ENCODE measurements at regions of chr3 and their contacts with region 1.

Region 1: DNA sequence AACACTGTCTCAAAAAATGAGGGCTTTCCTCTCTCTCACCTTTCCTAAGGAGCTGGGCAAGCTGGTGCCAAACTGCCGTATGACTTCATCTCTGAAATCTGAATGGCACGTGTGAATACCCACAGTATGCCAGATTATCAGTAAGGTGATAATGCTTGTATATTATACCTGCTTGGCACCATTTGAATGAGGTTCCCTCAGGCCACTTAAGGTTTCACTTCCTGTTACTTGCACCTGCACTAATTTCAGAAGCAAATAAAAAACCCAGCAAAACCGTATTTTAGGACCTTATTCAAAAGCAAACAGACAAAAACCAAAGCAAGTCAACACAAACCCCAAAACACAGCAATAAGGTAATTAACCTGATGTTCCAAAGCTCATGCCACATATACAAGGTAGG is 19.7 kb downstream of the FOXP1 start:
- DNase-seq: peak; percentile 27
- ATAC-seq: peak; percentile 93
- H3K4me3 ChIP-seq: no peak overlapping the region
- H3K27ac ChIP-seq: no peak overlapping the region
- H3K4me1 ChIP-seq: peaks cover 14% of the 10 kb centered on the region
- H3K27me3 ChIP-seq: no peaks in the 10 kb centered on the region; a peak in 1 of 4 replicates
- CTCF ChIP-seq: no peak
- EP300 ChIP-seq: peak; percentile 52 to 54; a peak in 1 of 4 replicates
- POLR2A ChIP-seq: no peak
- RAD21 ChIP-seq: no peak

Region 2: DNA sequence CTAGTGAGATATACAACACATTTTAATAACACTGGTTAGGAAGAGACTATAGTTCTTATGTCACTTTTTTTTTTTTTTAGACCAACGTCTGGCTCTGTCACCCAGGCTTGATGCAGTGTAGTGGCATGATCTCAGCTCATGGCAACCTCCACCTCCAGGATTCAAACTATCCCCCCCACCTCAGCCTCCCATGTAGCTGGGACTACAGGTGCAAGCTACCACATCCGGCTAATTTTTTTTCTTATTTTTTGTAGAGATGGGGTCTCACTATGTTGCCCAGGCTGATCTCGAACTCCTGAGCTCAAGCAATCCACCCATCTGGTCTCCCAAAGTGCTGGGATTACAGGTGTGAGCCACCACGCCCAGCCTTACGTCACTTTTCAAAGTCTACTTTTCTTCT is 81.1 kb before region 1 on chr3:
- CTCF ChIA-PET with region 1: no interaction called
- POLR2A ChIA-PET with region 1: no interaction called
- RAD21 ChIA-PET with region 1: no interaction called
- SMC1A ChIA-PET with region 1: no interaction called
- in situ Hi-C with region 1: no loop called
- intact Hi-C with region 1: loop called (anchors 1 kb)
- DNase-seq: no peak
- ATAC-seq: no peak
- H3K4me3 ChIP-seq: no peak overlapping the region
- H3K27ac ChIP-seq: no peak overlapping the region
- H3K4me1 ChIP-seq: no peaks in the 10 kb centered on the region
- H3K27me3 ChIP-seq: no peaks in the 10 kb centered on the region
- CTCF ChIP-seq: no peak
- EP300 ChIP-seq: no peak
- POLR2A ChIP-seq: no peak
- RAD21 ChIP-seq: no peak

Region 3: GRCh38 chr3:71579935-71580406 is 16.1 kb after region 1 on chr3:
- CTCF ChIA-PET with region 1: no interaction called
- POLR2A ChIA-PET with region 1: no interaction called
- RAD21 ChIA-PET with region 1: no interaction called
- SMC1A ChIA-PET with region 1: no interaction called
- in situ Hi-C with region 1: no loop called
- intact Hi-C with region 1: no loop called
- DNase-seq: no peak
- ATAC-seq: no peak
- H3K4me3 ChIP-seq: no peak overlapping the region
- H3K27ac ChIP-seq: no peak overlapping the region
- H3K4me1 ChIP-seq: peaks cover 9% of the 10 kb centered on the region
- H3K27me3 ChIP-seq: peaks cover 12 to 33% of the 10 kb centered on the region in 2 experiments
- CTCF ChIP-seq: no peak
- EP300 ChIP-seq: no peak
- POLR2A ChIP-seq: no peak
- RAD21 ChIP-seq: no peak

Region 4: DNA sequence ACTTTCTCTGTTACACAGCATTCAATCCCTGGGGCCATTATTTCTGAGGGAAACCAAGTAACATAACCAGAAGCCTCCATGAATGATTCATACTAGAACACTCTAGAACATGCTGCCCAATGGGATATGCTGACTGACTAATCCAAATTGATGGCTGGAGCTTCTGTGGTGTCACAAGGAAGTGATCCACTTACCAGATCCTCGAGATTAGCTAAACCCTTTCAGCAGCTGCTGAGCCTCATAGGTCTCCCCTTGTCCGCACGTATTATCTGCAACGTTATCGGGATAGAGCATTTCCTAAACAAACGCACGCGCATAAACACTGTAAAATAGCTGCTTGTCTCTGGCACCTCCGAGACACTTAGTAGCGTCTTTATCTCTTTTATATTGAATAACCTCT is 282.4 kb after region 1 on chr3:
- CTCF ChIA-PET with region 1: no interaction called
- POLR2A ChIA-PET with region 1: no interaction called
- RAD21 ChIA-PET with region 1: no interaction called
- SMC1A ChIA-PET with region 1: no interaction called
- in situ Hi-C with region 1: no loop called
- intact Hi-C with region 1: no loop called
- DNase-seq: no peak
- ATAC-seq: no peak
- H3K4me3 ChIP-seq: no peak overlapping the region
- H3K27ac ChIP-seq: no peak overlapping the region
- H3K4me1 ChIP-seq: no peaks in the 10 kb centered on the region
- H3K27me3 ChIP-seq: peaks cover 0 to 1% of the 10 kb centered on the region in 2 experiments; a peak in 2 of 4 replicates
- CTCF ChIP-seq: no peak
- EP300 ChIP-seq: no peak
- POLR2A ChIP-seq: no peak
- RAD21 ChIP-seq: no peak

Measured in GM12878 (cell line).